ENCODE measurements at regions of chr22 and their contacts with region 1.

Region 1: GRCh38 chr22:31977141-31977841 is 33.0 kb downstream of the YWHAH start:
- ATAC-seq: peak; percentile 93 to 99 (median 94)
- H3K4me3 ChIP-seq: no peak overlapping the region
- H3K27ac ChIP-seq: no peak overlapping the region
- H3K4me1 ChIP-seq: peaks cover 2 to 16% of the 10 kb centered on the region in 2 donors

Region 2: GRCh38 chr22:31846161-31847115 is 130.9 kb before region 1 on chr22:
- in situ Hi-C with region 1: no loop called
- ATAC-seq: peak in 1 of 8 experiments; percentile 37
- H3K4me3 ChIP-seq: no peak overlapping the region
- H3K27ac ChIP-seq: no peak overlapping the region
- H3K4me1 ChIP-seq: no peaks in the 10 kb centered on the region

Region 3: DNA sequence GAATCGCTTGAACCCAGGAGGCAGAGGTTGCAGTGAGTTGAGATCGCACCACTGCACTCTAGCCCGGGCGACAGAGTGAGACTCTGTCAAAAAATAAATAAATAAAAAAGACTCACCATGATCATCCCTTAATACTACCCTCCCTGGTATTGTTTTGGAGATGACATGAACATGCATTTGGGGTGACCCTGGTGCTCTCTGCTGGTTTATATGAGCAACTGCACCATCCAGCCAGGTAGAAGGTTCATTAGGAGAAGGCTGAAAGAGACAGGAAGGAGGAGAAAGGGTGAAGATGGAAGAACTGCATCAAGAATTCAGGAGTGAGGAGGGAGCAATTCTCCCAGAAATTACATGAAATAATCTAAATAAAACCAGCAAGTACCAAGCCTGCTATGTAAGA is 103.6 kb after region 1 on chr22:
- in situ Hi-C with region 1: loop called in 2 of 9 experiments (anchors 5 to 25 kb)
- ATAC-seq: peak in 3 of 8 experiments; percentile 50 to 73 (median 63)
- H3K4me3 ChIP-seq: no peak overlapping the region
- H3K27ac ChIP-seq: no peak overlapping the region
- H3K4me1 ChIP-seq: no peaks in the 10 kb centered on the region

Region 4: DNA sequence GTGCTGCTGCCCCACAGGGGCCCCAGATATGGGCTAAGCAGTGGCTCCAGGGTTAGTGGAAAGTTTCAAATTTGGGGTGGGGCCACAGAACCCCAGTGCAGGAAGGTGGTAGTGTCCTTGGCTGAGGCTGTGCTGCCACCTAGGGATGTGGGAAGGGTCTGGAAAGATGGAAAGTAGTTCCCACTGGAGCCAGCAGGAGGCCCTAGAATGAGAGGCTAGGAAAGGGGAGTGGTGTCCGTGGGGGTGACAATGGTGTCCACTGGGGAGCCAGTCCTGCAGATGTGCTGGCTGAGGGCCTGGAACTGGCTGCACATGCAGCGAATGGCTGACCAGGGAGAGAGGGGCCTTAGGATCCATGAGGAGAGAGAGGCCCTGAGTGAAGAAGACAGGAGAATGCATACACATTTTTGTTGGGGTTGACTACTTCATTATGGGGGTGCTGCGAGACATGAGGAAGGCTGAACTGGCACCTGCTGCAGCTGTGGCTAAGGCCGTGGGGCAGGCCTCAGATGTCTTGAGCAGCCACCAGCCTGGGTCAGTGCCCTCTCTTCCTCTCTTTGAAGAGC is 401.5 kb after region 1 on chr22:
- in situ Hi-C with region 1: loop called in 1 of 9 experiments (anchors 25 kb)
- ATAC-seq: peak in 6 of 8 experiments; percentile 46 to 93 (median 84)
- H3K4me3 ChIP-seq: no peak overlapping the region
- H3K27ac ChIP-seq: no peak overlapping the region
- H3K4me1 ChIP-seq: peaks cover 4 to 6% of the 10 kb centered on the region in 2 donors

Region 5: DNA sequence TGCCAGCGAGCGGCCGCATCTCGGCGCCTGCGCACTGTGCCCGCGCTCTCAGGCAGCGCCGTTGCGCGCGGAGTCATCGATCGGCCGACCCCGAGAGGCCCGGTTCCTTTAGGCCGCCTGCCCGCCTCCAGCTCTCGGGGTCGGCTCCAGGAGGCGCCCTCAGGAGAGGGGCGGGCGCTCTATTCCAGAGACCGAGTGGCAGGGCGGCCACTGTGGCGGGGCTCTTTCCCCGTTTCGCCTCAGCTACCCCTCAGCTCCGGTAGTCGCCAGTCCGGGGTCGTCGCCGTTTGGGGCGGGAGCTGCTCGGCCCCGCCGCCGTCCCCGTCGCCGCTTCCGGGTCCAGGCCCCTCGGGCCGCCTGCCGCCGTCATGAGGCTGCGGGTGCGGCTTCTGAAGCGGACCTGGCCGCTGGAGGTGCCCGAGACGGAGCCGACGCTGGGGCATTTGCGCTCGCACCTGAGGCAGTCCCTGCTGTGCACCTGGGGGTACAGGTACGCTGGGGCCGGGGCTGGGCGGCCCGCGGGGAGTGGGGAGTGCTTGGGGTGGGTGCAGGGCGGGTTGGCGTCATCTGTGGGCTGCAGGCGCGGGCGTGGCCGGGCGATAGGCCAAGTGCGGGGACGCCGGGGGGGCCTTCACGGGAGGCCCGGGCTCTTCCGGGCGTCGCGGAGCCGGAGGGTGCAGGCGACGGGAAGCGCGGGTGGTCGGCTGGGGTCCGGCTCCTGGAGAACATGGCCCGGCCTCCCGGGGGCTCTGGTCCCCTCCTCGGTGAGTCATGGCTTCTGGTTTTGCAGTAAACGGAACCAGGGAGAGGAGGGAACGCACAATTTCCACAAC is 497.6 kb after region 1 on chr22 and contains the start of gene FBXO7:
- in situ Hi-C with region 1: loop called in 1 of 9 experiments (anchors 25 kb)
- ATAC-seq: peak; percentile 64 to 88 (median 78)
- H3K4me3 ChIP-seq: peak within 1 kb of the TSS; percentile 68 to 92 (median 75)
- H3K27ac ChIP-seq: peak within 1 kb of the TSS; percentile 87 to 93
- H3K4me1 ChIP-seq: peaks cover 12 to 22% of the 10 kb centered on the region in 2 donors
- total RNA-seq, gene FBXO7: 39.8 to 100 (median 60.2) TPM

Measured in motor neuron (in vitro differentiated cells).